Dendritic cell treated with granulocyte-macrophage colony-stimulating factor and Interleukin-4, amounts not matched to agents 40 ng/mL and 50 ng/mL, for 4 days (primary cell): ENCODE measurements at regions of chr16 and their contacts with region 1.

Region 1: GRCh38 chr16:48353565-48354163 is 31.5 kb downstream of the SIAH1 start:
- H3K4me3 Mint-ChIP-seq: no peak overlapping the region
- H3K27ac Mint-ChIP-seq: peak overlapping the region; percentile 59
- H3K4me1 Mint-ChIP-seq: peaks cover 30% of the 10 kb centered on the region
- H3K27me3 Mint-ChIP-seq: no peaks in the 10 kb centered on the region

Region 2: GRCh38 chr16:48373258-48374029 is 19.8 kb after region 1 on chr16:
- intact Hi-C with region 1: no loop called
- H3K4me3 Mint-ChIP-seq: no peak overlapping the region
- H3K27ac Mint-ChIP-seq: no peak overlapping the region
- H3K4me1 Mint-ChIP-seq: peaks cover 39% of the 10 kb centered on the region
- H3K27me3 Mint-ChIP-seq: no peaks in the 10 kb centered on the region

Region 3: GRCh38 chr16:48409839-48410611 is 56.4 kb after region 1 on chr16:
- intact Hi-C with region 1: no loop called
- H3K4me3 Mint-ChIP-seq: no peak overlapping the region
- H3K27ac Mint-ChIP-seq: peak overlapping the region; percentile 57
- H3K4me1 Mint-ChIP-seq: peaks cover 37% of the 10 kb centered on the region
- H3K27me3 Mint-ChIP-seq: peaks cover 1% of the 10 kb centered on the region

Region 4: GRCh38 chr16:48542020-48542473 is 188.4 kb after region 1 on chr16:
- intact Hi-C with region 1: loop called (anchors 1 kb)
- H3K4me3 Mint-ChIP-seq: peak overlapping the region; percentile 13
- H3K27ac Mint-ChIP-seq: peak overlapping the region; percentile 83
- H3K4me1 Mint-ChIP-seq: peaks cover 78% of the 10 kb centered on the region
- H3K27me3 Mint-ChIP-seq: no peaks in the 10 kb centered on the region